ENCODE measurements at regions of chr3 and their contacts with region 1.

Region 1: DNA sequence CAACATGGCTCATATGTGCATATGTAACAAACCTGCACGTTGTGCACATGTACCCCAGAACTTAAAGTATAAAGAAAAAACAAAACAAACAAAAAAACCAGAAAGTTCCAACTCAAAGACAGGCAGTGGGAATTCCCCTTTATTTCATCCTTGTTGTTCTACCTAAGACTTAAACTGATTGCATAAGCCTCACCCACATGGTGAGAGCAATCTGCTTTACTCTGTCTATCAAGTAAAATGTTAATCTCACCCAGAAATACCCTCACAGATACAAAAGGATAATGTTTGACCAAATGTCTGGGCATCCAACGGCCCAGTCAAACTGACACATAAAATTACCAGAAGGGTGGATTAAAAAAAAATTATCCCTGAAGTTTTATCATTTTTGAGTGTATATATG is 190.9 kb upstream of the PLSCR5 start:
- DNase-seq: no peak
- ATAC-seq: no peak
- H3K4me3 ChIP-seq: no peak overlapping the region
- H3K4me3 Mint-ChIP-seq: no peak overlapping the region
- H3K27ac ChIP-seq: no peak overlapping the region
- H3K27ac Mint-ChIP-seq: no peak overlapping the region
- H3K4me1 ChIP-seq: no peaks in the 10 kb centered on the region
- H3K4me1 Mint-ChIP-seq: no peaks in the 10 kb centered on the region
- H3K27me3 ChIP-seq: no peaks in the 10 kb centered on the region
- H3K27me3 Mint-ChIP-seq: no peaks in the 10 kb centered on the region
- CTCF ChIP-seq: no peak

Region 2: DNA sequence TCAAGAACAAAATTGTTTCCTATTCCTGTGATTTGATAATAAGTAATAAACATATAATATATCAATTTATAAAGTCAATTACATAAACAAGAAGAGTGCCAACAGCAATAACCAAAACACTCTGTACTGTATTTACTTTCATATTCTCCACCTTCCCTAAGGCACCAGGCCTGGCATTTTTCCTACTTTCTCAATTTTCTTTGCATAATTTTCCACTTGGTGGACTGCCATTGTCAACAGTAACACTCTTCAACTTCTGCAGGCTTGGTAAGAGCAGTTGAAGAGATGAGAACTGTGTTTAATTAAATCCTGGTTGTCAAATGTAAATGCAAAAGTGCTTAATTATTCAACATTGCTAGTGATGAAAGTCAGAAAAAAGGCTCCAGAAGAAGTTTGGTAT is 38.8 kb after region 1 on chr3:
- CTCF ChIA-PET with region 1: no interaction called
- POLR2A ChIA-PET with region 1: no interaction called
- intact Hi-C with region 1: no loop called
- DNase-seq: no peak
- ATAC-seq: no peak
- H3K4me3 ChIP-seq: no peak overlapping the region
- H3K4me3 Mint-ChIP-seq: no peak overlapping the region
- H3K27ac ChIP-seq: no peak overlapping the region
- H3K27ac Mint-ChIP-seq: no peak overlapping the region
- H3K4me1 ChIP-seq: no peaks in the 10 kb centered on the region
- H3K4me1 Mint-ChIP-seq: no peaks in the 10 kb centered on the region
- H3K27me3 ChIP-seq: no peaks in the 10 kb centered on the region
- H3K27me3 Mint-ChIP-seq: no peaks in the 10 kb centered on the region
- CTCF ChIP-seq: no peak

Region 3: GRCh38 chr3:148591525-148591924 is 1795.4 kb after region 1 on chr3:
- CTCF ChIA-PET with region 1: no interaction called
- POLR2A ChIA-PET with region 1: no interaction called
- intact Hi-C with region 1: loop called (anchors 5 kb)
- DNase-seq: no peak
- ATAC-seq: no peak
- H3K4me3 ChIP-seq: no peak overlapping the region
- H3K4me3 Mint-ChIP-seq: no peak overlapping the region
- H3K27ac ChIP-seq: no peak overlapping the region
- H3K27ac Mint-ChIP-seq: no peak overlapping the region
- H3K4me1 ChIP-seq: no peaks in the 10 kb centered on the region
- H3K4me1 Mint-ChIP-seq: no peaks in the 10 kb centered on the region
- H3K27me3 ChIP-seq: no peaks in the 10 kb centered on the region
- H3K27me3 Mint-ChIP-seq: no peaks in the 10 kb centered on the region
- CTCF ChIP-seq: no peak